CD4-positive, alpha-beta memory T cell (primary cell): ENCODE measurements at regions of chr12 and their contacts with region 1.

Region 1: GRCh38 chr12:96501139-96501761 is 11.9 kb downstream of the CFAP54 start:
- DNase-seq: peak in 4 of 5 donors; percentile 29 to 65 (median 37)
- H3K4me3 ChIP-seq: peak overlapping the region in 1 of 2 donors; percentile 17
- H3K4me3 Mint-ChIP-seq: peak overlapping the region in 7 of 8 donors; percentile 35 to 74 (median 53)
- H3K27ac ChIP-seq: peak overlapping the region; percentile 18
- H3K27ac Mint-ChIP-seq: peak overlapping the region; percentile 79 to 98 (median 89)
- H3K4me1 ChIP-seq: peaks cover 46% of the 10 kb centered on the region
- H3K4me1 Mint-ChIP-seq: peaks cover 44 to 63% (median 54%) of the 10 kb centered on the region in 4 donors
- H3K27me3 ChIP-seq: no peaks in the 10 kb centered on the region
- H3K27me3 Mint-ChIP-seq: no peaks in the 10 kb centered on the region

Region 2: DNA sequence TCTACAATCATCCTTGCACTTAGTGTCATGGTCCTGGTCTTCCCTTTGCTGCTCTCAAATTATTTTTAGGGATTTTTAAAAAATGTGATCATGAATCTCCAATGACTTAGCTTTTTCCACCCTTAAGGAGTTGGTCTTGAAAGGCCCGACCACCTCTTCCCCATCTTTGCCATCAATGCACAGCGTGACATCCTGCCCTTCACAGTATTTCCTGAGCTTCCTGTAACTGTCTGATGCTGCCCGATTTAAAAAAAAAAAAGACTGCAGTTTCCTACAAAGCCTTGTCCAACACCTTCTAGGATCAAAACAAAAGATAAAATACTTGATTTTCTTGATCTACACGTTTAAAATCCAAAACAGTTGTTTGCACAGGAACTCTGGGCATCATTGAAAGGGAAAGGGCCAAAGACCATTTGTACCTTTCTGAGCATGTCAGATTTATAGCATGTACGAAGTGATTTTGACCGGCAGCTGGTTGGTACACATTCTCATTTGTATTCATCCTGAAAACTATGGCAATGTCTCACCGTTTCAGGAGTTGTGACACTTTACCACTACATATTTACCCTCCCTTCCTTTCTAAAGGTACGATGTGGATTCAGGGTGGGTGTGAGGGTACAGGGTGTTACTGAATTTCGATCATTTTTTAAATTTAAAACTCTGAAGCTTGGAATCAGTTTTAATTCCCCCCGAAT is 314.5 kb before region 1 on chr12:
- CTCF ChIA-PET with region 1: no interaction called
- POLR2A ChIA-PET with region 1: no interaction called
- intact Hi-C with region 1: no loop called
- DNase-seq: no peak
- H3K4me3 ChIP-seq: no peak overlapping the region
- H3K4me3 Mint-ChIP-seq: peak overlapping the region in 4 of 8 donors; percentile 43 to 71 (median 58)
- H3K27ac ChIP-seq: no peak overlapping the region
- H3K27ac Mint-ChIP-seq: peak overlapping the region in 5 of 7 donors; percentile 0 to 90 (median 9)
- H3K4me1 ChIP-seq: peaks cover 9% of the 10 kb centered on the region
- H3K4me1 Mint-ChIP-seq: peaks cover 17 to 30% (median 27%) of the 10 kb centered on the region in 4 donors
- H3K27me3 ChIP-seq: no peaks in the 10 kb centered on the region
- H3K27me3 Mint-ChIP-seq: no peaks in the 10 kb centered on the region

Region 3: DNA sequence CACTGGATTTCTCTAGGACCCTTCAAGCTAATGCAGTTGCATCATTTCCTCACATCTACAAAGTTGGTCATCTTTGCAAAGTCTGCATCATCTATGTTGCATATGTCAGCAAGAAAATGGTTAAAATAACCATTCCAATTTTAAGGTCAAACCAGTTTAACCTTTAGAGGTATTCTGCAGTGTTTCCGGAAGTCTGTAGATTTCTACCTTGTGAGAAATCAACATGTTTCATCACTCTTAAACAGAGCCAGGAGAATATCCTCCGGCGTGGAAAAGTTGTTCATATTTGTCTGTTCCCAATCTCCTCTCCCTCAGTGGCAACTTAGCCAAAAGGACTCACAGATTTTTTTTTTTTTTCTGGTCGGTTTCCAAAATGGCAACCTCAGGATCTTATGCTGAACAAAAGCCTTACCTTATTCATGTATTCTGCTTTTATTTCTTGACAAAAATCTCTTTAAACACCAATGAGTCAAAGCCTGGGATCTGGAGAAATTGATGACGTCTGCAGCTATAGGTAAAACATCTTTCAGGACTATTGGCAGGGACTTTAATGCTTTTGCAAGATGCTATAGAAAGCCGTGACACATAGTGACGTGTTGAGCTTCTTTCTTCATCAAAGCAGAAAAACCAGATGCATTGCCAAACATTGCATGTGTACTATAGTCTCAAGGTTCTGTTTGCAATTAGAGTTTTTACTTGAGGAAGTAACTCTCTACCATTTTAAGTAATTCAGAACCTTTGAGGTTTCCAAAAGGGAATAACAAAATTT is 85.0 kb before region 1 on chr12:
- CTCF ChIA-PET with region 1: no interaction called
- POLR2A ChIA-PET with region 1: no interaction called
- intact Hi-C with region 1: loop called (anchors 5 kb)
- DNase-seq: no peak
- H3K4me3 ChIP-seq: no peak overlapping the region
- H3K4me3 Mint-ChIP-seq: no peak overlapping the region
- H3K27ac ChIP-seq: no peak overlapping the region
- H3K27ac Mint-ChIP-seq: peak overlapping the region in 1 of 7 donors; percentile 48
- H3K4me1 ChIP-seq: peaks cover 17% of the 10 kb centered on the region
- H3K4me1 Mint-ChIP-seq: peaks cover 7 to 31% (median 13%) of the 10 kb centered on the region in 4 donors
- H3K27me3 ChIP-seq: no peaks in the 10 kb centered on the region
- H3K27me3 Mint-ChIP-seq: no peaks in the 10 kb centered on the region

Region 4: DNA sequence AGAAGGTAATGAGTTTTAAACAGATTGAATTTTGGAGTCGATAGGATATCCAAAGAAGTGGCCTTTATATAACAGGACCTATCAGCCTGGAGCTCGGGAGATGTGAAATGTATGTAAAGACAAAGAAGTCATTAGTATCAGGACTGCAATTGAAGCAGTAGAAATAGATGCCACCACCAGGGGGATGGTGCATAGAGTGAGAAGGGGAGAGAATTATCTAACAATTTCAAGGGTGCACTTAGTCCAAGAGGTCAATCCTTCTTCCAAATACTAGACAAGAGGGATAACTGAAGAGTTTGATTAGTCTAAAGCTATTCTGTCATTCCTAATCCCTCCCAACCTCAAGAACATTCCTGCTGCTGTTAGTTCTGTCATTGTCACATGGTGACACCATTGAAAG is 115.9 kb after region 1 on chr12:
- CTCF ChIA-PET with region 1: no interaction called
- POLR2A ChIA-PET with region 1: no interaction called
- intact Hi-C with region 1: no loop called
- DNase-seq: no peak
- H3K4me3 ChIP-seq: no peak overlapping the region
- H3K4me3 Mint-ChIP-seq: no peak overlapping the region
- H3K27ac ChIP-seq: no peak overlapping the region
- H3K27ac Mint-ChIP-seq: no peak overlapping the region
- H3K4me1 ChIP-seq: no peaks in the 10 kb centered on the region
- H3K4me1 Mint-ChIP-seq: peaks cover 0 to 2% (median 0%) of the 10 kb centered on the region in 4 donors
- H3K27me3 ChIP-seq: no peaks in the 10 kb centered on the region
- H3K27me3 Mint-ChIP-seq: peaks cover 4 to 11% of the 10 kb centered on the region in 2 donors